ENCODE measurements at regions of chr20 and their contacts with region 1.

Region 1: GRCh38 chr20:35303735-35304491 is 11.7 kb upstream of the FAM83C start:
- DNase-seq: peak; percentile 87
- H3K4me3 ChIP-seq: no peak overlapping the region
- H3K27ac ChIP-seq: peak overlapping the region in 2 of 4 donors; percentile 17 to 19
- H3K4me1 ChIP-seq: peaks cover 17 to 48% (median 28%) of the 10 kb centered on the region in 4 donors
- H3K27me3 ChIP-seq: no peaks in the 10 kb centered on the region
- CTCF ChIP-seq: peak; percentile 89 to 95 (median 93)
- EP300 ChIP-seq: no peak
- POLR2A ChIP-seq: no peak

Region 2: DNA sequence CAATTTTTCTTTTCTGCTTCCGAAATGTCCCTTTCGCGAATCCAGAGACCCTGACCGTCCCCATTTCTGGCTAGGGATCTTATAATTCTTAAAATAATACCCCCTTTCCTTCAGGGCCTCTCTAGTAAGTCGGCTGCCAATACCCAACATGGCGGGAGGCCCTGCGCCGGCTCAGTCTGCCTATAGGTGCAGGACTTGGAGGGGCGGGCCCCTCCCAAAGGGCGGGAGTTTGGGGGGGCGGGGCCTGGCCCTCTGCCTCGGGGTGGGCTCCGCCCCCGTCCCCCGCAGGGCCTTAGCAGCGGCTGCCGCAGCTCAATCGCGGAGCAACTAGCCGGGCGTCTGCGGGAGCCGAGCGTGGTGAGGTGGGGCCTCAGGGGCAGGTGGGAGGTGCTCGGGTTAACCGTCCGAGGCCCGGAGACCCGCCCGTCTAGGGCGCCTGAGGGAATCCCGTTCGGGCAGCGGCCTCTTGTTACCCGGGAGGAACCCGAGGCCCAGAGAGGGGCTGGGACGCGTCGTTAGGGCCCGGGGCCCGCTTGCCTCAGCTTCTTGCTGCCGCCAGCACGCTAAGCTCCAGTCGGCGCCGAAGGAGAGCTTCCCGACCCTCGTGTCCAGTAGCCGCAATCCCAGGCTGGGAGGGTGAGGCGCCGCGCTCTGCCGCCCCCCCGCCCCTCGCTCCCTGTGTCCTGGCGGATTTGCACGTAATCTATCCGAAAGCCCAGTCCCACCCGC is 151.1 kb after region 1 on chr20 and contains the start of gene CEP250:
- in situ Hi-C with region 1: loop called in 1 of 4 experiments (anchors 5 kb)
- intact Hi-C with region 1: no loop called
- DNase-seq: peak; percentile 95
- H3K4me3 ChIP-seq: peak within 1 kb of the TSS; percentile 49 to 99 (median 77)
- H3K27ac ChIP-seq: peak within 1 kb of the TSS; percentile 90 to 97 (median 96)
- H3K4me1 ChIP-seq: peaks cover 0 to 23% (median 11%) of the 10 kb centered on the region in 4 donors
- H3K27me3 ChIP-seq: no peaks in the 10 kb centered on the region
- CTCF ChIP-seq: peak in 1 of 5 experiments; percentile 29
- EP300 ChIP-seq: no peak
- POLR2A ChIP-seq: no peak
- total RNA-seq, gene CEP250: 22.8 to 38.6 (median 28.7) TPM

Region 3: GRCh38 chr20:35735828-35736470 is 432.0 kb after region 1 on chr20:
- in situ Hi-C with region 1: no loop called
- intact Hi-C with region 1: no loop called
- DNase-seq: no peak
- H3K4me3 ChIP-seq: no peak overlapping the region
- H3K27ac ChIP-seq: peak overlapping the region in 1 of 4 donors; percentile 6
- H3K4me1 ChIP-seq: peaks cover 21 to 87% (median 70%) of the 10 kb centered on the region in 4 donors
- H3K27me3 ChIP-seq: no peaks in the 10 kb centered on the region
- CTCF ChIP-seq: no peak
- EP300 ChIP-seq: no peak
- POLR2A ChIP-seq: no peak

Measured in transverse colon (tissue), 4 donors.